ENCODE measurements at regions of chr16 and their contacts with region 1.

Region 1: GRCh38 chr16:67968400-67969253 is at the start of gene SLC12A4:
- DNase-seq: peak; percentile 94
- ATAC-seq: peak; percentile 90
- H3K4me3 Mint-ChIP-seq: peak within 1 kb of the TSS; percentile 84
- H3K27ac Mint-ChIP-seq: peak within 1 kb of the TSS; percentile 80
- H3K4me1 Mint-ChIP-seq: peaks cover 14% of the 10 kb centered on the region
- H3K27me3 Mint-ChIP-seq: no peaks in the 10 kb centered on the region
- total RNA-seq, gene SLC12A4: 21.8 to 25.8 TPM

Region 2: DNA sequence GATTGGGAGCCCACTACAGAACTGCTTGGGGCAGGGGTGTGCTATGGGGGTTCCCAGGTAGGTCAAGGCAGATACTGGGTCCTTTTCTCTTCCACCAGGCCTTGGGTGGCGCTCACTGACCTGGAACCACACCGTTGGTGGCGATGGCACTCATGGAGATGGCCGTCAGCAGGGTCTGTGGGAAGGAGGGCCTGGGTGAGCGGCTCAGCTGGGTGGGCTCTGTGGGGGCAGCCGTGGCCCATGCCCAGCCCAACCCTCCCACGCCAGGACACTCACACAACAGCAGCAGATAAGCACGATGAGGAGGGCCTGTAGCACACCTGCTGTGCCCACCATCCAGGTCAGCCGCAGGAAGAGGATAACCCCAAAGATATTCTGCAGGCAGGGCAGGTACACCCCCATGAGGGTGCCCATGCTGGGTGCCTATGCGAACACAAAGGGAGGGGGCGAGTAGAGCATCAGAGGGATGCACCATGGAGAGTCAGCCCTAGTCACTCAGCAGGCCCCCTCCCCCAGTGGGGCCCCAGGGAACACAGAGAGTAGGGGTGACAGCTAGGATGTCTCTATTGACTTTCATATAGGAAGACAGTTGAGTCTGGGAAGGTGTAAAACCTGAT is 10.9 kb before region 1 on chr16:
- CTCF ChIA-PET with region 1: no interaction called
- POLR2A ChIA-PET with region 1: no interaction called
- intact Hi-C with region 1: no loop called
- DNase-seq: no peak
- ATAC-seq: no peak
- H3K4me3 Mint-ChIP-seq: no peak overlapping the region
- H3K27ac Mint-ChIP-seq: no peak overlapping the region
- H3K4me1 Mint-ChIP-seq: no peaks in the 10 kb centered on the region
- H3K27me3 Mint-ChIP-seq: no peaks in the 10 kb centered on the region

Region 3: GRCh38 chr16:68237243-68238028 is 268.8 kb after region 1 on chr16:
- CTCF ChIA-PET with region 1: no interaction called
- POLR2A ChIA-PET with region 1: no interaction called
- intact Hi-C with region 1: loop called in 1 of 2 experiments (anchors 1 kb)
- DNase-seq: peak; percentile 96
- ATAC-seq: peak; percentile 79
- H3K4me3 Mint-ChIP-seq: peak overlapping the region; percentile 83
- H3K27ac Mint-ChIP-seq: peak overlapping the region; percentile 86
- H3K4me1 Mint-ChIP-seq: peaks cover 40% of the 10 kb centered on the region
- H3K27me3 Mint-ChIP-seq: no peaks in the 10 kb centered on the region